Esophagus squamous epithelium (tissue), 5 donors: ENCODE measurements at regions of chr11 and their contacts with region 1.

Region 1: GRCh38 chr11:10307442-10308207 is 2.8 kb downstream of the ADM start:
- DNase-seq: peak; percentile 34
- H3K4me3 ChIP-seq: peak overlapping the region; percentile 61 to 84 (median 78)
- H3K27ac ChIP-seq: peak overlapping the region; percentile 86 to 96 (median 92)
- H3K4me1 ChIP-seq: peaks cover 30 to 74% (median 43%) of the 10 kb centered on the region in 3 donors
- H3K27me3 ChIP-seq: peaks cover 0 to 14% (median 0%) of the 10 kb centered on the region in 4 donors
- CTCF ChIP-seq: peak; percentile 98 to 100 (median 99)
- POLR2A ChIP-seq: peak in 2 of 4 donors; percentile 8 to 31

Region 2: GRCh38 chr11:9982800-9983579 is 324.6 kb before region 1 on chr11:
- intact Hi-C with region 1: loop called (anchors 10 kb)
- DNase-seq: no peak
- H3K4me3 ChIP-seq: no peak overlapping the region
- H3K27ac ChIP-seq: peak overlapping the region; percentile 9 to 54 (median 28)
- H3K4me1 ChIP-seq: peaks cover 5 to 15% (median 6%) of the 10 kb centered on the region in 3 donors
- H3K27me3 ChIP-seq: no peaks in the 10 kb centered on the region
- CTCF ChIP-seq: no peak
- POLR2A ChIP-seq: no peak

Region 3: GRCh38 chr11:10096987-10097386 is 210.6 kb before region 1 on chr11:
- intact Hi-C with region 1: no loop called
- DNase-seq: no peak
- H3K4me3 ChIP-seq: no peak overlapping the region
- H3K27ac ChIP-seq: no peak overlapping the region
- H3K4me1 ChIP-seq: no peaks in the 10 kb centered on the region
- H3K27me3 ChIP-seq: no peaks in the 10 kb centered on the region
- CTCF ChIP-seq: no peak
- POLR2A ChIP-seq: no peak

Region 4: DNA sequence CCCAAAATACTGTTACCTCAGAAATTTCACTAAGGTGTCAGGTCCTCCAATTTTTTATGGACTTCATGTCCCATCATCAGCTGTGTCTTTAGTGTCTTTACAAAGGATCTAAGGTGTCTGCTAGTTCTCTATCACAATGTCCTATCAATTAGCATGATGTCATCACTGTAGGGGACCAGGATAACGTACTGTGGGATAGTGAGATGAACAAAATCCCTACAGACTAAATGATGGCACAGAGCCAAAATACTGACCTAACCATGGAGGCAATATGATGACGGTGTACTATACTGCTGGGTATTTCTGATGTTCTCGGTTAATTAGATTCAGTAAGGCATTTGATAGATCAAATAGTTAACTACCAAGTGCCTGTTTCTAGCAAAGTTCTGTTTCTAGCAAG is 96.2 kb before region 1 on chr11:
- intact Hi-C with region 1: loop called (anchors 5 kb)
- DNase-seq: no peak
- H3K4me3 ChIP-seq: no peak overlapping the region
- H3K27ac ChIP-seq: no peak overlapping the region
- H3K4me1 ChIP-seq: peaks cover 0 to 6% (median 0%) of the 10 kb centered on the region in 3 donors
- H3K27me3 ChIP-seq: no peaks in the 10 kb centered on the region
- CTCF ChIP-seq: no peak
- POLR2A ChIP-seq: no peak

Region 5: GRCh38 chr11:10233581-10233980 is 74.0 kb before region 1 on chr11:
- intact Hi-C with region 1: no loop called
- DNase-seq: no peak
- H3K4me3 ChIP-seq: no peak overlapping the region
- H3K27ac ChIP-seq: no peak overlapping the region
- H3K4me1 ChIP-seq: peaks cover 0 to 5% (median 0%) of the 10 kb centered on the region in 3 donors
- H3K27me3 ChIP-seq: no peaks in the 10 kb centered on the region
- CTCF ChIP-seq: no peak
- POLR2A ChIP-seq: no peak